Left cardiac atrium (tissue), 4 donors: ENCODE measurements at regions of chr6 and their contacts with region 1.

Region 1: DNA sequence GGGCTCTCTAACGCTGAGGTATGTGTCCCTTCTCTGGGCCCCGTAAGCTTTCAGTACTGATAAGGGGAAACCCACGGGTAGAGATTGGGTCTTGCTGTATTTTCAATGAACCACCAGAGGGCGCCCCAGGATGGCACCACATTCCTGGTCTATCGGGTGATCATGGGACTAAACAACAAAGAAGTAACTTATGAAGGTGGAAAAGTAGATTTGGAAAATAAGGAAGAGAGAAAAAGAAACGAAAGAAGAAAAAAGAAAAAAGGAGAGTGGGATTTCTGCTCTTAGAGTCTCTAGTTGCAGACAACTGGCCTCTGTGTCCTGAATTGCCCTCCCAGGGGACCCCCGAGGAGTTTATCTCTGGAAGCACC is 93.8 kb downstream of the GMPR start:
- DNase-seq: peak; percentile 78
- ATAC-seq: peak; percentile 79 to 81

Region 2: GRCh38 chr6:16409531-16410441 is 77.6 kb after region 1 on chr6:
- intact Hi-C with region 1: loop called (anchors 2 to 5 kb)
- DNase-seq: peak; percentile 57
- ATAC-seq: peak; percentile 54 to 67

Region 3: DNA sequence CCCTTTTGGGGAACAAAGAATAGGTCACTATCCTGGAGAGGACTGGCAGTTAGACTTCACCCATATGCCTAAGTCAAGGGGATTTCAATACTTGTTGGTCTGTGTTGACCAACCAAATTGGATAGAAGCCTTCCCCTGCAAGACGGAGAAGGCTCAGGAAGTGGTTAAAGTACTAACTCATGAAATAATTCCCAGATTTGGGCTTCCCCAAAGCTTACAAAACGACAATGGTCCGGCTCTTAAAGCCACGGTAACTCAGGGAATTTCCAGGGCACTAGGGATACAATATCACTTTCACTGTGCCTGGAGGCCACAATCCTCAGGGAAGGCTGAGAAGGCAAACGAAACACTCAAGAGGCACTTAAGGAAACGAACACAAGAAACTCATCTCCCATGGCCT is 129.3 kb after region 1 on chr6:
- intact Hi-C with region 1: no loop called
- DNase-seq: no peak
- ATAC-seq: no peak

Region 4: DNA sequence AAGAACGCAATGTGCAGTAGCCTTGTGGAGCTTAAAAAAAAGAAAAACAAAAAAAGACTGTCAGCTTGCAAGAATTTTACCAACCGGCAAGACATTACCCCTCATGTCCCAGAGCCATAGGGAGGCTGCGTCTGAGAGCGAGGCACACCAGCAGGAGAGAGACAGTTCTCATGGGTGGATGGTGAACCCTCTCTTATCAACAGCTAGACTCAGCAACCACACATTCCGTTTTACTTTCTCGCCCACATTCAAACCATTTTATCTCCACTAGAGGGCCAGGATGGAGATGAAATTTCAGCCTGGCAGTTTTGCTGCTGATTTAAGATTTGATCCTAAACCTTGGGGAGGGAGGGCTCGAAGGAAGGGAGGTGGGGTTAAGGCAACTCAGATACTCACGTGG is 182.1 kb after region 1 on chr6:
- intact Hi-C with region 1: loop called in 1 of 2 experiments (anchors 10 kb)
- DNase-seq: no peak
- ATAC-seq: peak; percentile 59 to 66

Region 5: DNA sequence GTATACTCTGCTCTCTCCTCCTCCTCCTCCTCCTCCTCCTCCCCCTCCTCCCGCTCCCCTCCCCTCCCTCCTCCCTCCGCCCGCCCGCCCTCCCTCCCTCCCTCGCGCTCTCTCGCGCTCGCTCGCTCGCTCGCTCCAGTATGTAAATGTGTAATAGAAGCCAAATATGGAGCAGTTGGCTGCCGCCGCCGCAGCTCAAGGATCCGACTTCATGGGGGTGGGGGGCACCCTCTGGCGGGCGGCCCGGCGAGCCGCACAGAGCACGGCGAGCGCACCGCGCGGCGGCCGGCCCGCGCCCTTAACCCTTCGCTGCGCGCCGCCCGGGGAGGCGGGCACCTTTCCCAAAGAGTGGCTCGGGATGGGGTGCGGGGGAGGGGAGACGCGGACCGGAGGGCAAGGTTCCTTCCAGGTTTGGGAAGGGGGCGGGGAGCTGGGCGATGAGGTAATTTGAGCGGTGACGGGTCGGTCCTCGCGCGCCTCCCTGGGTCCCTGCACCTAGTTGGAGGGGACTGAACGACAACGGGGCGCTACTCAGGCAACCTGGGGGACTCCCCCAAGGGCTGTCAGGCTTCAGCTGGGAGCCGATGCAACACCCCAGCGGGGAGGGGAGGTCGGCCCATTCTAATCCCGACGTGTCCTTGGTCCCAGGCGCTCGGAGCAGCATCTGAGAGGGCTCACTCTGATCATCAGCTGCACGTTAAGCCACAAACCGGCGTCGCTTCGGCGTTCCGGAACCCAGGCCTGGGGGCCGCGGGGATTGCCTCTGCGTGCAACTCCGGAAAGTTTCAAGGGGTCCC is 429.5 kb after region 1 on chr6:
- intact Hi-C with region 1: loop called (anchors 5 to 10 kb)
- DNase-seq: peak; percentile 88
- ATAC-seq: peak; percentile 51 to 61

Region 6: GRCh38 chr6:17086469-17086868 is 754.3 kb after region 1 on chr6:
- intact Hi-C with region 1: loop called in 1 of 2 experiments (anchors 10 kb)
- DNase-seq: peak; percentile 31
- ATAC-seq: peak; percentile 85 to 86